Right cardiac atrium (tissue), 5 donors: ENCODE measurements at regions of chr6 and their contacts with region 1.

Region 1: GRCh38 chr6:132161283-132161682 is 210.1 kb upstream of the CCN2 start:
- DNase-seq: no peak
- ATAC-seq: peak; percentile 63 to 76
- H3K4me3 ChIP-seq: no peak overlapping the region
- H3K27ac ChIP-seq: no peak overlapping the region
- H3K4me1 ChIP-seq: no peaks in the 10 kb centered on the region
- H3K27me3 ChIP-seq: no peaks in the 10 kb centered on the region

Region 2: GRCh38 chr6:131923356-131923755 is 237.9 kb before region 1 on chr6:
- intact Hi-C with region 1: loop called in 3 of 4 experiments (anchors 2 to 10 kb)
- DNase-seq: peak in 2 of 3 donors; percentile 22 to 69
- ATAC-seq: peak; percentile 45 to 54
- H3K4me3 ChIP-seq: no peak overlapping the region
- H3K27ac ChIP-seq: no peak overlapping the region
- H3K4me1 ChIP-seq: no peaks in the 10 kb centered on the region
- H3K27me3 ChIP-seq: no peaks in the 10 kb centered on the region

Region 3: GRCh38 chr6:131960371-131961133 is 200.7 kb before region 1 on chr6:
- intact Hi-C with region 1: loop called in 2 of 4 experiments (anchors 10 kb)
- DNase-seq: no peak
- ATAC-seq: no peak
- H3K4me3 ChIP-seq: no peak overlapping the region
- H3K27ac ChIP-seq: no peak overlapping the region
- H3K4me1 ChIP-seq: no peaks in the 10 kb centered on the region
- H3K27me3 ChIP-seq: no peaks in the 10 kb centered on the region

Region 4: DNA sequence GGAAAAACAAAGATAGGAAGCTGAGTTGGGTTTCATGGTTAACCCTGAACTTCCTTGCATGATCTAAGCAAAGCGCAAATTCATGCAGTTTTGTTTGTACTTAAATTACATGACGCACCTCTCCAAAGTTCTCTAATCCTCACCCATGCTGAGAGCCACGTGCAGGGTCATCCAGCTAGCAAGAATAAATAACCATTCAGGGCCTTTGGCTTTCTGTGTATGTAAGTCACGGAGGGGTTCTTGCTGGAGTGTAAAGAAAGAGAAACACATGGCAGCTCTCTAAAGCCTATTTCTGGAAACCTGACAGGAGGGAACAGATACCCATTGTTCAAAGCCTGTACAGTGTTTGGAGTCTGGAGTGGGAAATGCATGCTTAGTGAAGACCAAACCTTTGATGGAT is 38.4 kb before region 1 on chr6:
- intact Hi-C with region 1: no loop called
- DNase-seq: peak in 1 of 3 donors; percentile 25
- ATAC-seq: peak; percentile 51 to 86
- H3K4me3 ChIP-seq: no peak overlapping the region
- H3K27ac ChIP-seq: no peak overlapping the region
- H3K4me1 ChIP-seq: no peaks in the 10 kb centered on the region
- H3K27me3 ChIP-seq: no peaks in the 10 kb centered on the region